PC-3 (cell line): ENCODE measurements at regions of chr1 and their contacts with region 1.

Region 1: DNA sequence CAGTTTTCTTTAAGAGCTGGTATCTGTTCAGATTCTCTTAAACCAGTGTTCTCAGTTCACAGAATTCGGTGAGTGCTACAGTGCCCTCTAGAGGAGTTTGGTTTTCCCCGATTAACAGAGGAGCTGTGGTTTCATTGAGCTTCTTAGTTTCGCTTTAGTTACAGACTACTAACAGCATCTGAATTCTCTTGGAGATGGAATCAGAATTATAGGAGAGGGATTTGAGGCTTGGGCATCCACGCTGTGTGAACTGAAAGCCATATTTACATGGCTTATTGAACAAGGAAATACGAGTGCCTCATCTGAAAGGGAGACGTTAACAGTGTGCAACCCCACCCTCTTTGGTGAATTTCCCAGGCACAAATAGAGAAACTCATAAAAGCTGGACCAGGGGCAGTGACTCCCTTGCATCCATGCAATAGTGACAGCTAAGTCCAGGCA is 202.0 kb downstream of the USH2A start:
- DNase-seq: peak; percentile 96
- ATAC-seq: peak; percentile 89
- H3K4me3 ChIP-seq: peak overlapping the region; percentile 68
- H3K27ac ChIP-seq: no peak overlapping the region
- H3K4me1 ChIP-seq: peaks cover 13% of the 10 kb centered on the region
- H3K27me3 ChIP-seq: peaks cover 12% of the 10 kb centered on the region; the same call in 1 of the 2 replicates
- CTCF ChIP-seq: peak; percentile 99

Region 2: GRCh38 chr1:214977110-214977509 is 1244.2 kb before region 1 on chr1:
- CTCF ChIA-PET with region 1: interaction called, 10 read pairs
- POLR2A ChIA-PET with region 1: no interaction called
- intact Hi-C with region 1: no loop called
- DNase-seq: no peak
- ATAC-seq: no peak
- H3K4me3 ChIP-seq: no peak overlapping the region
- H3K27ac ChIP-seq: no peak overlapping the region
- H3K4me1 ChIP-seq: no peaks in the 10 kb centered on the region
- H3K27me3 ChIP-seq: no peaks in the 10 kb centered on the region
- CTCF ChIP-seq: no peak

Region 3: DNA sequence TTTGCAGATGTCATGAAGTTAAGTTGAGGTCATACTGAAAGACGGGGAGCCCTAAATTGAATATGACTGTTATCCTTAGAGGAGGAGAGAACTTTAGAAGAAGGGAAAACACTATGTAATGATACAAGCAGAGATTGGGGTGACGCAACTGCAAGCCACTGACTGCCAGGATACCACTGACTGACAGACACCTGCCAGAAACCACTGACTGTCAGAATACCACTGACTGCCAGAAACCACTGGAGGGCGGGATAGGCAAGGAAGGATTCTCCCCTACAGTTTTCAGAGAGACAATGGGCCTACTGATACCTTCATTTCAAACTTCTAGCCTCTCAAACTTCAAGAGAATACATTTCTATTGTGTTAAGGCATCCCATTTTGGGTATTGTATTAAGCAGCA is 186.8 kb before region 1 on chr1:
- CTCF ChIA-PET with region 1: no interaction called
- POLR2A ChIA-PET with region 1: no interaction called
- intact Hi-C with region 1: loop called (anchors 1 kb)
- DNase-seq: peak; percentile 60
- ATAC-seq: peak; percentile 91
- H3K4me3 ChIP-seq: no peak overlapping the region
- H3K27ac ChIP-seq: no peak overlapping the region
- H3K4me1 ChIP-seq: no peaks in the 10 kb centered on the region
- H3K27me3 ChIP-seq: peaks cover 22% of the 10 kb centered on the region
- CTCF ChIP-seq: peak; percentile 67

Region 4: DNA sequence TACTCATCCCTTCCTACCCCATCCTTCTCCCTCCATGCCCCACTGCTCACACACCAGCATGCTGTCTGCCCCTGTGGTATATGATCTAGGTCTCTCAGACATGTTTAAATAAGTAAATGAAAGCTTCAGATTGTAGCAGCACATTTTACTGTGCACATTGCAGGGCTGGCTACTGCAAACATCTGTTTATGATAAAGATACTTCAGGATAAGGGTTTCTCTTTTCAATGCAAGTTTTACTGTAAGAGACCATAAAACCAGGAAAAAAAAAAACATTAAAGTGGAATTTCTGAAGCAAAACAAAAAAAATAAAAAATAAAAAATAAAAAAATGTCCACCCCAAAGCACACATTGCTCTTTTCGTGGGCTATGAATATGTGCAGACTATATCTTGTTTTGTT is 17.6 kb after region 1 on chr1:
- CTCF ChIA-PET with region 1: interaction called, 10 read pairs
- POLR2A ChIA-PET with region 1: interaction called, 3 read pairs
- intact Hi-C with region 1: loop called (anchors 1 kb)
- DNase-seq: no peak
- ATAC-seq: no peak
- H3K4me3 ChIP-seq: no peak overlapping the region
- H3K27ac ChIP-seq: no peak overlapping the region
- H3K4me1 ChIP-seq: peaks cover 14% of the 10 kb centered on the region
- H3K27me3 ChIP-seq: peaks cover 10% of the 10 kb centered on the region; the same call in 1 of the 2 replicates
- CTCF ChIP-seq: no peak

Region 5: DNA sequence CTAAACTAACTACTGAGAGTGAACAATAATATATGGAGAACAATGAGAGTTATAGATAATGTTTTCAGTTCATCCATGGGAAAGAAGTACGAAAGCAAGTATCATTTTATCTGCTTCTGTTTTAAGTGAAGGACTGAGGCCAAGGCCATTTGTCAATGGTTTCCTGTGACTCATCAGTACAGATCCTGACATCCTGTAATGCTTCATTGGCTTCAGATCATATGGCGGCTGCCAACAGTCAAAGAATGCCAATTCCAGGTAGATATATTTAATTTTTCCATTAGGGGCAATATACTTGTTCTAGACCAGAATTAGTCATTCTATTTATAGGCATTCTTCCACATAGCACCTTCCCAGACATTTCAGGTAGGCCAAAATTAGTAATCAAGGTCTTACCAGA is 104.7 kb after region 1 on chr1:
- CTCF ChIA-PET with region 1: no interaction called
- POLR2A ChIA-PET with region 1: no interaction called
- intact Hi-C with region 1: loop called (anchors 1 kb)
- DNase-seq: peak; percentile 98
- ATAC-seq: peak; percentile 90
- H3K4me3 ChIP-seq: no peak overlapping the region
- H3K27ac ChIP-seq: peak overlapping the region; percentile 49
- H3K4me1 ChIP-seq: peaks cover 24% of the 10 kb centered on the region
- H3K27me3 ChIP-seq: no peaks in the 10 kb centered on the region
- CTCF ChIP-seq: no peak

Region 6: GRCh38 chr1:216523449-216524190 is 302.3 kb after region 1 on chr1:
- CTCF ChIA-PET with region 1: interaction called, 10 read pairs
- POLR2A ChIA-PET with region 1: no interaction called
- intact Hi-C with region 1: no loop called
- DNase-seq: peak; percentile 40
- ATAC-seq: peak; percentile 69
- H3K4me3 ChIP-seq: no peak overlapping the region
- H3K27ac ChIP-seq: no peak overlapping the region
- H3K4me1 ChIP-seq: peaks cover 6% of the 10 kb centered on the region; the same call in 1 of the 2 replicates
- H3K27me3 ChIP-seq: 0 out of 2 replicates have a peak, but pooled peaks cover 4% of the 10 kb centered on the region
- CTCF ChIP-seq: no peak

Region 7: DNA sequence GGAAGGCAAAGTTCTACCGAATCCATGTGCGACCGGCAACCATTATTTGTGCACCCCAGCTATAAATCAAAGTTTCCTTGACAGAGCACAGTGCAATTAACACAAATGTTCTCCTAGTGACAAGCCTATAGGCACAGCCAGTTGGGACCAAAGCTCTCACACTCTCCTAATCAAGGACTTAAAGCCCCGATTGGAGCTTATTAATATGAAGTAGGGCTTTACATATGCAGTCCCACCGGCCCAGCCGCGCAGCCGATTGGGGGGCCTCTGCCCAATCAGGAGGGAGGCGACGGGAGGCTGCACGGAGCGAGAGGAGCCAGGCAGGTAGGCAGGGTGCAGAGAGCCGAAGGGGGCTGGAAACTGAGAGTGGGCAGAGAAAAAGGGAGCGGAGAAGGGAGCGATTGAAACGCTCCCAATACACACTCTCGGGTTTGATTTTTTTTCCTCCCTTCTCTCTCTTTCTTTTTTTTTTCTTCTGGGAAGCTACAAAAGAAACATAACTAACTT is 502.0 kb after region 1 on chr1 and contains the start of gene ESRRG:
- CTCF ChIA-PET with region 1: no interaction called
- POLR2A ChIA-PET with region 1: no interaction called
- intact Hi-C with region 1: loop called (anchors 5 kb)
- DNase-seq: no peak
- ATAC-seq: peak; percentile 87
- H3K4me3 ChIP-seq: peak within 1 kb of the TSS; percentile 23
- H3K27ac ChIP-seq: no peak within 1 kb of the TSS
- H3K4me1 ChIP-seq: no peaks in the 10 kb centered on the region
- H3K27me3 ChIP-seq: peaks cover 98% of the 10 kb centered on the region
- CTCF ChIP-seq: no peak
- total RNA-seq, gene ESRRG: 1.1 and 1.7 TPM in 2 replicates